Activated CD4-positive, alpha-beta memory T cell treated with anti-CD3 and anti-CD28 coated beads for 36 hours (primary cell): ENCODE measurements at regions of chr7 and their contacts with region 1.

Region 1: DNA sequence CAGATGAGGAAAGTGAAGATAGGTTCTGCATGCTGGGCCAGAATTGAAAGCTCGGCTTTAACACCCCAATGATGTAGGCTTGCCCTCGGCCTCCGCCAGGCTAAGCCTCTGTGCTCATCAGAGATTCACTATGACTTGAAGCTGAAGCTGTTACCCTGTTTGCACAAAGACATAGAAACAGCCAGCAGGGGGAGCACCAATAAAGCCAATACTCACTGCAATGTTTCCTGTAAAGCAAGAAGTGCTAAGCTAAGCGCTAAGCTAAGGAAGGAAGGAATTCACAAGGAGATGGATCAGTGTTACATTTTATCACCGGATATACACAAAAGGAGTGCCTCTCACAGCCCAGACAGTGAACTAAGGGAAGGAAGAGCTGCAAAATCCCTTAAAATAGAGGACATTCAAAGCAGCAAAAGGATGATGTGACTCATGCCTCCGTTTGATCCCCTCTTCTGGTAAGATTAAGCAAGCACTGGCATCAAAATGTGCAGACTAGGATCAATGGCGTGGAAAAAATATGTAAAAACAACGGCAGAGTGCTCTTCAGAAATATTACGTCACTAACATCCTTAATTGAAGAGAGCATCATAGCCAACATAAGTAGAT is 153.8 kb downstream of the COBL start:
- DNase-seq: peak; percentile 84
- H3K4me3 Mint-ChIP-seq: no peak overlapping the region
- H3K27ac Mint-ChIP-seq: no peak overlapping the region
- H3K4me1 Mint-ChIP-seq: peaks cover 10% of the 10 kb centered on the region
- H3K27me3 Mint-ChIP-seq: peaks cover 21% of the 10 kb centered on the region

Region 2: GRCh38 chr7:50467817-50468610 is 694.8 kb before region 1 on chr7:
- CTCF ChIA-PET with region 1: interaction called, 49 read pairs
- POLR2A ChIA-PET with region 1: no interaction called
- intact Hi-C with region 1: loop called (anchors 1 kb)
- DNase-seq: peak; percentile 89
- H3K4me3 Mint-ChIP-seq: no peak overlapping the region
- H3K27ac Mint-ChIP-seq: no peak overlapping the region
- H3K4me1 Mint-ChIP-seq: peaks cover 12% of the 10 kb centered on the region
- H3K27me3 Mint-ChIP-seq: peaks cover 2% of the 10 kb centered on the region

Region 3: DNA sequence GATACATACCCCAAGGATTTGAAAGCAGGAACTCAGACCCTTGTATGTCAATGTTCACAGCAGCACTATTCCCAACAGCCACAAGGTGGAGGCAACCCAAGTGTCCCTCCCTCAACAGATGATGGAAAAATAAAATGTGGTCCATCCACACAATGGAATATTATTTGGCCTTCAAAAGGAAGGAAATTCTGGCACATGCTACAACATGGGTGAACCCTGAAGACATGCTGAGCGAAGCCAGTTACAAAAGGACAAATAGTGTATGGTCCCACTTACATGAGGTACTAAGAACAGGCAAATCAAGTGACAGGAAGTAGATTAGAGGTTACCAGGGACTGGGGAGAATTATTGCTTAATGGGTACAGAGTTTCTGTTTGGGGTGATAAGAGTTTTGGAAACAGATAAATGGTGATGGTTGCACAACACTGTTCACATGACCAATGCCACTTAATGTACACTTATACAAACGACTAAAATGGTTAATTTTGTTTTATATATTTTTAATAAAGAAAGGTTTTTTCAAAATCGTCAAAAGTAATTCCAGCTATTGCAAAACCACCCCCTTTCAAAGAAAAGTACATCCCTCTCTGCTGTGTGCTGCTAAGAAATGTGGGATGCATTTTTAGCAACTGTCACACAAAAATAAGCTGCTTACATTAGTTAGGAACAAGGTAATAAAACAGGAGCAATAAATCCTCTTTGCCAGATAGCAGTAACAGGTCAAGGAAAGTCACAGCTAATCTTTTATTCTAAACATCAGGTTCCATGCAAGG is 465.8 kb before region 1 on chr7:
- CTCF ChIA-PET with region 1: interaction called, 17 read pairs
- POLR2A ChIA-PET with region 1: no interaction called
- intact Hi-C with region 1: loop called (anchors 5 kb)
- DNase-seq: no peak
- H3K4me3 Mint-ChIP-seq: no peak overlapping the region
- H3K27ac Mint-ChIP-seq: no peak overlapping the region
- H3K4me1 Mint-ChIP-seq: peaks cover 11% of the 10 kb centered on the region
- H3K27me3 Mint-ChIP-seq: no peaks in the 10 kb centered on the region

Region 4: DNA sequence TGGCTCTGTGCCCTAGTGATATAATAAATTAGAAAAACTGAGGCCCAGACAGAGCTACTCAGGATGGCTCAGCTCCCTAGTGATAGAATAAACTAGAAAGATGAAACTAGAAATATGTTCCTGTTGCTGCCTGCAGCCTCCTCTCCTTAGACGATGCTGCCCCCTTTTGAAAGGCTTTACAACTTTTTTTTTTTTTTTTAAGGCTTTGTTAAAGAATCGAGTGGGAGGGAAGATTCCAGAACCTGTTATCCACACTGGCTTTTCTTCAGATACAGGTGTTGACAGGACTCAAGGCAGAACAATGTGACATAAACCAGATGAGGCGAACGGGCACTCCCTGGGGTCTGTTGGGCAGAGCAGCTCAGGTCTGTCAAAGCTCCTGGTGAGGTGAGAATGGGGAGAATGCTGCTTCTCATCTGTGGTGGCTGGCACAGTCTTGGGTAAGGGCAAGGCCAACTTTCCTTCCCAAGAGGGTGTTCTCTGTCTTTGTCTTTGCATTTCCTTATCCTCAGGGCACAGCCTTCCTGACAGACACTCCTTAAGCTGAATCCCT is 21.3 kb before region 1 on chr7:
- CTCF ChIA-PET with region 1: interaction called, 86 read pairs
- POLR2A ChIA-PET with region 1: no interaction called
- intact Hi-C with region 1: no loop called
- DNase-seq: peak; percentile 27
- H3K4me3 Mint-ChIP-seq: no peak overlapping the region
- H3K27ac Mint-ChIP-seq: no peak overlapping the region
- H3K4me1 Mint-ChIP-seq: peaks cover 17% of the 10 kb centered on the region
- H3K27me3 Mint-ChIP-seq: peaks cover 5% of the 10 kb centered on the region

Region 5: GRCh38 chr7:51366930-51367613 is 204.2 kb after region 1 on chr7:
- CTCF ChIA-PET with region 1: interaction called, 64 read pairs
- POLR2A ChIA-PET with region 1: no interaction called
- intact Hi-C with region 1: loop called (anchors 1 kb)
- DNase-seq: peak; percentile 12
- H3K4me3 Mint-ChIP-seq: no peak overlapping the region
- H3K27ac Mint-ChIP-seq: no peak overlapping the region
- H3K4me1 Mint-ChIP-seq: no peaks in the 10 kb centered on the region
- H3K27me3 Mint-ChIP-seq: no peaks in the 10 kb centered on the region

Region 6: GRCh38 chr7:51428217-51428887 is 265.5 kb after region 1 on chr7:
- CTCF ChIA-PET with region 1: interaction called, 5 read pairs
- POLR2A ChIA-PET with region 1: no interaction called
- intact Hi-C with region 1: loop called (anchors 1 kb)
- DNase-seq: no peak
- H3K4me3 Mint-ChIP-seq: no peak overlapping the region
- H3K27ac Mint-ChIP-seq: no peak overlapping the region
- H3K4me1 Mint-ChIP-seq: peaks cover 4% of the 10 kb centered on the region
- H3K27me3 Mint-ChIP-seq: peaks cover 5% of the 10 kb centered on the region

Region 7: DNA sequence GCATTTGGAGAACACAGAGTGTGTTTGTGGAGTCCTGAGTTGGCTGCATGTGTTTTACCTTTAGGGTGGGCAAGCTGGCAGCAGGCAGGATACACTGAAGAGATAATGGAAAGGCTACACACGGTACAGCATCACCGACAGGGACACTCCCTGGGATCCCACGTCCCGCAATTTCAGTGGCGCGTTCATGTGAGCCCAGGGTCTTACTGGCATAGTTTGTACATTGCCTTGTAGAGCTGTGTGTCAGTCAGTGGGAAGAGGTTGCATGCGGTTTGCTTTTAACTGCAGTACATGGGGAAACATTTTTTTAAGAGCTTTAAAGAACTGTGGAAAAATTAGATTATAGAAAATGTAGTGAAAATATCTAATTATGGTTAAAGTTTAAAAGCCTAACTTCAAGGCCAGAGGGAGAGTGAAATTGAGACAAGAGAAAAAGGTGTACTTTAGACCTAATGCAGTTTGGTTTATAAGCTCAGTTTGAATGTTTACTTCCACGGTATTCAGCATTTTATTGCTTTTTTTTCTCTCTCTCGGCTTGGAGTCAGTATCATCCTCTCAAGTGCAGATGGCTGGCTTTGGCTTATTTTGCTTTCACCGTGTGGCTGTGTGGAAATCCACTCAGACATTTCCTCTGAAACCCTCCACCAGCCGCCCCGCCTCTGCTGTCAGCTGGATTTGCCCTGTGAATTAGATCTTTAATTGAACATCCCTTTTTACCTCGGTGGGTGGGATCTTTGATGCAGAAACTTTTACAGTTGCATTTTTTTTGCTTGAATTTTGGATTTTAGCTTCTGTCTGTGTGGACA is 518.0 kb after region 1 on chr7:
- CTCF ChIA-PET with region 1: no interaction called
- POLR2A ChIA-PET with region 1: no interaction called
- intact Hi-C with region 1: no loop called
- DNase-seq: no peak
- H3K4me3 Mint-ChIP-seq: no peak overlapping the region
- H3K27ac Mint-ChIP-seq: no peak overlapping the region
- H3K4me1 Mint-ChIP-seq: no peaks in the 10 kb centered on the region
- H3K27me3 Mint-ChIP-seq: no peaks in the 10 kb centered on the region